Dorsolateral prefrontal cortex (tissue), 120 donors: ENCODE measurements at regions of chr12 and their contacts with region 1.

Region 1: DNA sequence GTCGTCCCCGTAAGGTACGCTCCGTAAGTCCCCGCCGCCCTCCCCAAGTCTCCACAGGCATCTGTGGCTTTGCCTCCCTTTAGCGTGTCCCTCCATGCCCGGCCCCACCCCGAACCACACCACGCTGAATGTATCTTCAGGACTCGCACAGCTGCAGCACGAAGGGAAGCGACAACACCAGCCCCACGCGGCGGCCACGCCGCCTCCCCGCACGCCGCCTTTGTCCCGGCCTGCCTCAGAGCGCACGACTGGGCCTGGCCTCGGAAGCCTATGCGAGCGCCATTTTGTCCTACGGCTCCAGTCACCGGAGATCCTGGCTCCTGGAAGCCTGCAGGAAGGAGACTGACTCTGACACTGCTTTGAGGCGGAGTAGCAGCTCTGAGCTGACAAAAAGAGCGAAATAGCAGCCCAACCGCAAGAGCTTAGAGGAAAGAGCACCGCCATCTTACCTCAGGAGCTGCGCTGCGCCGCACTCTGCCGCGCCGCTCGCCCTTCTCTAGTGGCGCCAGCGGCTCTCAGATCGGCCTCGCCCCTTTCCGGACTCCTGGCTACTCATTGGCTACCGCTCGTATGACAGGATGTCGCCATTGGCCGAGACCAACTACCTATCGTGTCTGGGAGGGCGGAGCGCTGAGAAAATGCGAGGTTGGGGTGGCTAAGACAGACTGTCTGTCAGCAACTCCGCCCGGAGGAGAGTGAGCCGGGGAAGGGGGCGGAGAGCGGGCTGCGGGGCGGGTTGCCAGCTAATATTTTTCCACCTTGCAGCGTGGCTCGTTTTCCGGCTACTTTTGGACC is at the start of gene KANSL2:
- DNase-seq: peak; percentile 94 to 99 (median 99)
- H3K4me3 ChIP-seq: peak within 1 kb of the TSS; percentile 79 to 100 (median 94)
- H3K27ac ChIP-seq: peak within 1 kb of the TSS; percentile 68 to 98 (median 93)
- H3K27me3 ChIP-seq: no peaks in the 10 kb centered on the region
- CTCF ChIP-seq: peak in 34 of 56 donors; percentile 9 to 63 (median 32)
- total RNA-seq, gene KANSL2: 16.3 to 40.2 (median 25.6) TPM

Region 2: DNA sequence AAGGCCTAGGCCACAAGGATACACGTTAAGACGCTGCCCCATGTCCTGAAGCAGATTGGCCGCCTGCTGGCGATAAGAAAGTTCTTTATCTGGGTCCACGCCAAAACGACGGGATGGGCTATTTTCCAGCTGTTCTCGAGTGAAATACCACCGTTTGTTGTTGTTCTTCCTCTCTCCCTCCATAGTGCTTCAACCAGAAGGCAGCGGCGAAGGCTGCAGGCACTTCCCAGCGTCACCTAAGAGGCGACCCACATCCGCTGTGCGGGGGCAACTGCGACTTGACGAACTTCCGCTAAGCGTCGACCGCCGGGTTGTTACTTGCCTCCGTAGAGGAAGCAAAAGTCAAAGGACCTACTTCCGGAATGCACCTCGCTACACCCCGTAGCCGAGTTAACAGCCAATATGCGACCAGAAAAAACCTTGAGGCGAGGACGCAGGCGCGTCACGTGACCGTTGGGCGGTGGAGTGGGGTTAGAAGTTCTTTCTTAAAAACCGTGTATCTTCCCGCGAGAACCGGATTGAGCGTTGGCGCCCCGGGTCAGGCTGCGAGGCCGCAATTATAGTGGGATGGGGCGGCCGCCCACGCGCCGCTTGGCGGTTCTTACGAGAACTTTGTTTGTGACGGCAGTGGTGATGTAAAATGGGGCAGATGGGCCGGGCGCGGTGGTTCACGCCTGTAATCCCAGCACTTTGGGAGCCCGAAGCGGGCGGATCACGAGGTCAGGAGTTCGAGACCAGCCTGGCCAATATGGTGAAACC is 34.7 kb after region 1 on chr12 and contains the start of gene CCNT1:
- intact Hi-C with region 1: loop called (anchors 2 to 5 kb)
- DNase-seq: peak; percentile 93 to 98 (median 97)
- H3K4me3 ChIP-seq: peak within 1 kb of the TSS; percentile 57 to 96 (median 83)
- H3K27ac ChIP-seq: peak within 1 kb of the TSS; percentile 59 to 98 (median 92)
- H3K27me3 ChIP-seq: no peaks in the 10 kb centered on the region
- CTCF ChIP-seq: peak in 41 of 56 donors; percentile 1 to 55 (median 34)
- total RNA-seq, gene CCNT1: 27.7 to 58.9 (median 38.1) TPM